A549 (cell line): ENCODE measurements at regions of chr20 and their contacts with region 1.

Region 1: DNA sequence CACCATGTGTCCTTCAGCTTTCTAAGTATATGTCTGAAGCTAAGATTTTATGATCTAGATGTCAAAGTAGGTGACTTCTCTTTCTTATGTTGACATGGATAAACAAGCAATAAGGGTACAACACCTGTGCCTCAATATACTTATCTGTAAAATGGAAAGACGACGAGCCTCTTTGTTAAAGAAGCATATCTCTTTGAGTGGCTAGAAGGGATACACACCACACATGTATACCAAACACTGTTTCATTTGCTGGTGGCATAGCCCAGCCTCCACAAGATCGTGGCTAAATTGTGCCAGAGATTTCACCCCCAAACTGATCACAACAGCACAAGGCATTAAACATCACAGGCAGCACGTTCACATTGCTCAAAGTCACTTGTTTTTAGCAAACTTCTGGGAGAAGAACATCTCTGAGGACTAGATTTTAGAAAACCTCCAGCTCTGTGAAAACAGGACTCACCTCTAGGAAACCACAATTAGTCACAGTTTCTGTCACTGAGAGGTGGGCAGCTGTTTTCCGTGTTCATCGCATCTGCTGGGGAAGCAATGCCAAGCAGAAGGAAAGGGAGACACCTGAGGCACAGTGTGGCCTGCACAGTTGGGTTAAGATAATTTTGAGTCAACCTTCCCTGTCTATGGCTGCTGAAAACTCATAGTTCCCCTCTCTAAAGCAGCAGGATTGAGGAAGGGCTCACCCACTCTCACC is 263.0 kb upstream of the PLCB4 start:
- DNase-seq: no peak
- ATAC-seq: no peak
- H3K4me3 ChIP-seq: no peak overlapping the region
- H3K27ac ChIP-seq: no peak overlapping the region
- H3K4me1 ChIP-seq: no peaks in the 10 kb centered on the region
- CTCF ChIP-seq: no peak
- EP300 ChIP-seq: no peak
- POLR2A ChIP-seq: no peak
- RAD21 ChIP-seq: no peak

Region 2: GRCh38 chr20:8790442-8791074 is 15.3 kb before region 1 on chr20:
- CTCF ChIA-PET with region 1: interaction called, 11 read pairs
- POLR2A ChIA-PET with region 1: no interaction called
- DNase-seq: peak; percentile 15 to 63
- ATAC-seq: peak; percentile 69 to 75; a peak in 5 of 6 replicates
- H3K4me3 ChIP-seq: no peak overlapping the region
- H3K27ac ChIP-seq: peak overlapping the region in 1 of 2 experiments; percentile 44; a peak in 1 of 6 replicates
- H3K4me1 ChIP-seq: no peaks in the 10 kb centered on the region
- CTCF ChIP-seq: peak; percentile 99
- EP300 ChIP-seq: no peak
- POLR2A ChIP-seq: no peak
- RAD21 ChIP-seq: peak; percentile 95 to 98

Region 3: GRCh38 chr20:8867181-8867740 is 61.4 kb after region 1 on chr20:
- CTCF ChIA-PET with region 1: no interaction called
- POLR2A ChIA-PET with region 1: no interaction called
- DNase-seq: no peak
- ATAC-seq: no peak
- H3K4me3 ChIP-seq: no peak overlapping the region
- H3K27ac ChIP-seq: no peak overlapping the region
- H3K4me1 ChIP-seq: 0 out of 3 replicates have a peak, but pooled peaks cover 4% of the 10 kb centered on the region
- CTCF ChIP-seq: no peak
- EP300 ChIP-seq: no peak
- POLR2A ChIP-seq: no peak
- RAD21 ChIP-seq: no peak

Region 4: DNA sequence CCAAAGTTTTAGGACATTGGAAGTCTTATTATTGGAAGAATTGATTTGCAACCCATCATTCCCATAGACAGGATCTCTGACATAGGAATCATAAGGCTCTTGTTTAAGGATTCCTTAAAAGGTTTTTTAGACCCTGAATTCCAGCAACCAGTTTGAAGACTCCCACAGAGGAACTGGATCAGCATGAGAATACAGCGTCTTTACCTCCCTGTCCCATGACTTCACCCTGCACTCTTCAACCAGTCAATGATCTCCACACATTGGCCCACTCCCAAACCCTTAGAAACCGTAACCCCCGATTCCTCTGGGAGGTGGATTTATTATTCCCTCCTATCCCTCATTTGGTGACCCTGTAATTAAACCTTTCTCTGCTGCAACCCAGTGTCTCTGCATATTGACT is 112.3 kb after region 1 on chr20:
- CTCF ChIA-PET with region 1: no interaction called
- POLR2A ChIA-PET with region 1: no interaction called
- DNase-seq: no peak
- ATAC-seq: no peak
- H3K4me3 ChIP-seq: no peak overlapping the region
- H3K27ac ChIP-seq: no peak overlapping the region
- H3K4me1 ChIP-seq: no peaks in the 10 kb centered on the region
- CTCF ChIP-seq: no peak
- EP300 ChIP-seq: no peak
- POLR2A ChIP-seq: no peak
- RAD21 ChIP-seq: no peak

Region 5: DNA sequence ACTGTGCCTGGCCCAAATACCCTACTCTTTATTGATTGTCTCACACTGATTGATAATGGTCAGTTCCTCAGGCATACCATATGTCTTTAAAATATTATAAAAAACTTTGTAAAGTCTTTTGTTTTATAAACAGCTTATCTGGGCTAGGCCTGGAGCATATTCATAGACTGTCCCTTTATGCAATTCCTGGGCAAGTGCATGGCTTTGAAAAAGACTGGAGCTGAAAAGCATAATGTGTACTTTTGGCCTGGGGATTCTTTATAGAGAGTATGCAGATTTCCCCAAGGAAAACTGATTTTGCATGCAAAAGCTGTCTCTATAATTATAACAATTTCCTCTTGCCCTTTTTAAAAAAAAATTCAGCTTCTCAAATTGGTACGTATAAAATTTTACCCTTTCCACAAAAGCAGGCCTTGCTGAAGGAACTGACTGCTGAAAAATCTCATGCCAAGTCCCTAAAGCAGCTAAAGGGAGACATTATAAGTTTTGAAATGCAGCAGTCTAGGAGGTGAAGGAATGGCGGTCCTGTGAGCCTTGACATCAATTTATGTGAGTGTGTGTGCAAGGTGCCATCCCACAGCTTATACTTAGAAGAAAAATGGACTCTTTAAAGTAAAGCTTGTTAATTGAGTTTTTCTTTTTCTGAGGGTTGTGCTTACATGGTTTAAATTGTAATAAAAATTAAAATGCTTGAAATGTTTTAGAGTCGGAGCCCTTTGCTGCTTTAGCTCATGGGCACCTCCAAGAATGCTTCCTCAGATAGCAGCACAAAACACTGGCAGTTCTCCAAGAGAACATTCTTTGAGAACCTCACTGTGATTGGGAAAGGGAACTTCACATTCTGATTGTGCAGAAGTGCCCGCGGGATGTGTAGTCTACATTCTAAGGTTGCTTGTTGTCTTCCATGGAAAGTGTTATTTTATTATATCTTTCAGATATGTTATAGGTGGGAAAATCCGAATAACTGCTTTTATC is 306.9 kb after region 1 on chr20:
- CTCF ChIA-PET with region 1: no interaction called
- POLR2A ChIA-PET with region 1: no interaction called
- DNase-seq: no peak
- ATAC-seq: no peak
- H3K4me3 ChIP-seq: no peak overlapping the region
- H3K27ac ChIP-seq: no peak overlapping the region
- H3K4me1 ChIP-seq: peaks cover 19% of the 10 kb centered on the region
- CTCF ChIP-seq: no peak
- EP300 ChIP-seq: no peak
- POLR2A ChIP-seq: no peak
- RAD21 ChIP-seq: no peak